ENCODE measurements at regions of chr15 and their contacts with region 1.

Region 1: GRCh38 chr15:29139540-29140459 is 129.8 kb downstream of the NSMCE3 start:
- DNase-seq: peak in 4 of 5 donors; percentile 35 to 37 (median 36)
- H3K4me3 ChIP-seq: no peak overlapping the region
- H3K4me3 Mint-ChIP-seq: peak overlapping the region in 3 of 8 donors; percentile 27 to 61 (median 34)
- H3K27ac ChIP-seq: no peak overlapping the region
- H3K27ac Mint-ChIP-seq: no peak overlapping the region
- H3K4me1 ChIP-seq: peaks cover 8% of the 10 kb centered on the region
- H3K4me1 Mint-ChIP-seq: peaks cover 6 to 12% (median 7%) of the 10 kb centered on the region in 4 donors
- H3K27me3 ChIP-seq: peaks cover 6% of the 10 kb centered on the region
- H3K27me3 Mint-ChIP-seq: peaks cover 27 to 33% of the 10 kb centered on the region in 2 donors

Region 2: GRCh38 chr15:29225534-29226234 is 85.9 kb after region 1 on chr15:
- CTCF ChIA-PET with region 1: no interaction called
- POLR2A ChIA-PET with region 1: no interaction called
- intact Hi-C with region 1: no loop called
- DNase-seq: peak in 1 of 5 donors; percentile 23
- H3K4me3 ChIP-seq: no peak overlapping the region
- H3K4me3 Mint-ChIP-seq: no peak overlapping the region
- H3K27ac ChIP-seq: no peak overlapping the region
- H3K27ac Mint-ChIP-seq: no peak overlapping the region
- H3K4me1 ChIP-seq: no peaks in the 10 kb centered on the region
- H3K4me1 Mint-ChIP-seq: no peaks in the 10 kb centered on the region
- H3K27me3 ChIP-seq: no peaks in the 10 kb centered on the region
- H3K27me3 Mint-ChIP-seq: peaks cover 31 to 40% of the 10 kb centered on the region in 2 donors

Region 3: DNA sequence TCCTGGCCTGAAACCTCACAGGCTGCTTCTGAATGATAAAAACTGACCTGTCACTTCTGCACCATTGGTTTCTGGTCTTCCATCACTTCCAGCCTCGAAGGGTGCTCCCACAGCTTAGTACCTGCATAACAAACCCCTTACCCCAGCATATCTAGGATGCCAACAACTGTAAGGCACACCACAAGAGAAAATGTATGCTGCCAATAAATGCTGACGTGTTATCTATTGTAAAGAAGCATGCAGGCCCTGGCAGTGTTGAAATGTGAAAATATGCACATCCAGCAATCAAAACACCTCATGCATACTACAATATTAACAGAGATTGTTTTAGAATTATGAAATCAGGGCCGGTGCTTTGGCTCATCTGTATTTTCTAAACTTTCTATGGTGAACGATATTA is 371.9 kb after region 1 on chr15:
- CTCF ChIA-PET with region 1: no interaction called
- POLR2A ChIA-PET with region 1: no interaction called
- intact Hi-C with region 1: no loop called
- DNase-seq: no peak
- H3K4me3 ChIP-seq: no peak overlapping the region
- H3K4me3 Mint-ChIP-seq: no peak overlapping the region
- H3K27ac ChIP-seq: no peak overlapping the region
- H3K27ac Mint-ChIP-seq: no peak overlapping the region
- H3K4me1 ChIP-seq: no peaks in the 10 kb centered on the region
- H3K4me1 Mint-ChIP-seq: no peaks in the 10 kb centered on the region
- H3K27me3 ChIP-seq: no peaks in the 10 kb centered on the region
- H3K27me3 Mint-ChIP-seq: peaks cover 2 to 3% of the 10 kb centered on the region in 2 donors

Region 4: DNA sequence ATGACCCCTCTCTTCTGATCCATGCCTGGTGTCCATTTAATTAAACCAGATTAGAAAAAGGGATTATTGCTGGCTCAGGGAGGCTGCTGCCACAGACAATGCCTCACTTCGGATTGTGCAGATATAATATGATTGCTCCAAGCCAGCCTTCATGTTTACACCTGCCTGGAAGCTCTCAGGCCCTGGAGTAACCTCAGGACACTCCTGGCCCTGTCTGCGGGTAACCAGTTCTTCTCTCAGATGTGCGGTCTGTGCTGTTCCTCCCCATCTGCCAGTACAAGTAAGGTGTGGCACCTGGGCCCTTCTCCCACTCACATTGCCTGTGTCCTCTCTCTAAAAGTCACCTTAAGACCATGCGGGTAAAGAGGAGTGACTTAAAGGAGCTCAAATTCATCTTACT is 934.1 kb after region 1 on chr15:
- CTCF ChIA-PET with region 1: no interaction called
- POLR2A ChIA-PET with region 1: no interaction called
- intact Hi-C with region 1: loop called (anchors 10 kb)
- DNase-seq: no peak
- H3K4me3 ChIP-seq: no peak overlapping the region
- H3K4me3 Mint-ChIP-seq: no peak overlapping the region
- H3K27ac ChIP-seq: no peak overlapping the region
- H3K27ac Mint-ChIP-seq: no peak overlapping the region
- H3K4me1 ChIP-seq: no peaks in the 10 kb centered on the region
- H3K4me1 Mint-ChIP-seq: peaks cover 0 to 3% (median 0%) of the 10 kb centered on the region in 4 donors
- H3K27me3 ChIP-seq: no peaks in the 10 kb centered on the region
- H3K27me3 Mint-ChIP-seq: peaks cover 8 to 15% of the 10 kb centered on the region in 2 donors